ENCODE measurements at regions of chr5 and their contacts with region 1.

Region 1: GRCh38 chr5:44774279-44774880 is 34.4 kb upstream of the MRPS30 start:
- DNase-seq: no peak
- ATAC-seq: peak; percentile 50
- H3K4me3 ChIP-seq: no peak overlapping the region
- H3K27ac ChIP-seq: no peak overlapping the region
- H3K4me1 ChIP-seq: no peaks in the 10 kb centered on the region
- H3K27me3 ChIP-seq: no peaks in the 10 kb centered on the region

Region 2: DNA sequence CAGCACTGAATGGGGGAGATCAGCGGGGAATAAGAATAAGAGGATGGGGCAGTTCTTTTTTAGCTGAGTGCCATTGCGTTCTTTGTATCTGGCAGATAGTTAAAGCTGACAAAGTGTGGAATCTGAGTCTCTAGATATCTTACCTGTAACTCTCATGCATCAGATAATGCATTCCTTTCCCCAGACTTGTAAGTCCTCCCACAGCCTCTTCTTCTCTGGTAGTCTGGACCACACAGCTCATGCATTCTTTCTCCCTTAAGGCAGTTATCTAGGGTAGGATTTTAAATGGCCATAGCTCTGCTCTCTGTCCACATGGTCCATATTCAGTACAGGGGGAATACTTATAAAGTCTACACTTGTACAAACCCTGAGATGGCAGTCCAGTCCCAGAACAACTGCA is 331.2 kb before region 1 on chr5:
- intact Hi-C with region 1: no loop called
- DNase-seq: no peak
- ATAC-seq: no peak
- H3K4me3 ChIP-seq: no peak overlapping the region
- H3K27ac ChIP-seq: no peak overlapping the region
- H3K4me1 ChIP-seq: no peaks in the 10 kb centered on the region
- H3K27me3 ChIP-seq: no peaks in the 10 kb centered on the region

Region 3: DNA sequence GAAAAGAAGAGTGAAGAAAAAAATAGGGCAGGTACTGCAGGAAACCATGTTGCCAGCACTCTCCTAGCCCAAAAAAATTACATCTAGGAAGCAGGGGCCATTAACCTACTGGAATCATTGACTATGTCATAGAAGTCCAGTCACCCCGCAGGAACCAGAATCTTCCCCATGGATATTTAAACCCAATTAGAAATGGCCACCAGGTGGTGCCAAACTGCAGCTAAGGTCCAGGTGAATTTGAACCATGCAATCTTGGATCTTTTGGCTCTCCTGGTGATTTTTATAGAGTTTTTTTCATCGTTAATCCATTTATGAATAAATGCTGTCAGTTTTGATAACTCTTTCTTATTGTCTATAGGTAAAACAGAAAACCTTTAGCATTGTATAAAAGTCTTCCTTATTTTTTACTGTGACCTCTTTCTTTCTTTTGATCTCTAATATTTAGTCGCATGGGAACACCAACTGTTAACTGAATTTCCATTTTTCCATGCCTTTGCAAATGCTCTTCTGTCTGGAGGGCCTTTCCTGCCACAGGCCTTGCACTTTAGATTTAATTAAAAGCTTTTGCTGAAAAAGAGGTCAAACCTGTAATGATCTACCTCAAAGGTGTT is 237.6 kb before region 1 on chr5:
- intact Hi-C with region 1: loop called (anchors 5 to 10 kb)
- DNase-seq: no peak
- ATAC-seq: no peak
- H3K4me3 ChIP-seq: no peak overlapping the region
- H3K27ac ChIP-seq: no peak overlapping the region
- H3K4me1 ChIP-seq: no peaks in the 10 kb centered on the region
- H3K27me3 ChIP-seq: no peaks in the 10 kb centered on the region

Region 4: DNA sequence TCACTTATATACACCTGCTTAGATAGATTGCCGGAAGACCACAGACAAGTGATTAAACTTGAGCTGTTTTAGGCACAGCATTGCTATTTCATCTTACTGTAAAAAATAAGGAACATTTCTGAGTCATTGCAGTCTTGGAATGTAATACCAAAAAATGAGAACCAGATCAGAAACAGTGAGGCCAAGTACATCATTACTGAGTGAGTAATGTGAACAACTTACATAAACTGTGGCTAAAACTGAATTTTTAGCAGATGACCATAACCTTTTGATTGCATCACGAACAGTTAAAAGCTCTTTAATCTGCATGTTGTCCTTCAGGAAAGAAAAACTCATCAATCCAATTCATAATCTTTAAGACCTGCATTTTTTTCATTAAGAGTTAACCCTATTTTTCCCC is 228.1 kb before region 1 on chr5:
- intact Hi-C with region 1: loop called in 1 of 2 experiments (anchors 10 kb)
- DNase-seq: no peak
- ATAC-seq: peak; percentile 78
- H3K4me3 ChIP-seq: no peak overlapping the region
- H3K27ac ChIP-seq: no peak overlapping the region
- H3K4me1 ChIP-seq: no peaks in the 10 kb centered on the region
- H3K27me3 ChIP-seq: no peaks in the 10 kb centered on the region

Measured in aorta (tissue), 5 donors.